ENCODE measurements at regions of chr3 and their contacts with region 1.

Region 1: DNA sequence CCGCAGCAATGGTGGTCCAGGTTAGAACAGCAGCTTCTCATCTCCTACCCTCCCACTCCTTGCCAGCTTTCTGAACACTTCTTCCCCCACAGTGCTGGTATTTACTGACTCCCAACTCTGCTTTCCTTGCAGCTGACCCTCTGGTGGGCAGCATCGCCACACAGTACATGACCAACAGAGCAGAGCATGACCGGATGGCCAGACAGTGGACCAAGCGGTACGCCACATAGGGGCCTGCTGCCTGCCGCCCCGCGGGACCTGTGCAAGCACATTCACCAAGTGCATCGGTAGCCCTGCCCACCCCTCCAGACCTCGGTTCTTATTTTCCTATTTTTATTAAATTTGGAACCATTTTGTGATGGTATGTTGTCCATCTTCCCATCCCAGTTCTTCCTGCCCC is 216.2 kb upstream of the UBE2E1 start:
- DNase-seq: no peak

Region 2: GRCh38 chr3:23442598-23443383 is 146.8 kb before region 1 on chr3:
- intact Hi-C with region 1: no loop called
- DNase-seq: no peak

Region 3: DNA sequence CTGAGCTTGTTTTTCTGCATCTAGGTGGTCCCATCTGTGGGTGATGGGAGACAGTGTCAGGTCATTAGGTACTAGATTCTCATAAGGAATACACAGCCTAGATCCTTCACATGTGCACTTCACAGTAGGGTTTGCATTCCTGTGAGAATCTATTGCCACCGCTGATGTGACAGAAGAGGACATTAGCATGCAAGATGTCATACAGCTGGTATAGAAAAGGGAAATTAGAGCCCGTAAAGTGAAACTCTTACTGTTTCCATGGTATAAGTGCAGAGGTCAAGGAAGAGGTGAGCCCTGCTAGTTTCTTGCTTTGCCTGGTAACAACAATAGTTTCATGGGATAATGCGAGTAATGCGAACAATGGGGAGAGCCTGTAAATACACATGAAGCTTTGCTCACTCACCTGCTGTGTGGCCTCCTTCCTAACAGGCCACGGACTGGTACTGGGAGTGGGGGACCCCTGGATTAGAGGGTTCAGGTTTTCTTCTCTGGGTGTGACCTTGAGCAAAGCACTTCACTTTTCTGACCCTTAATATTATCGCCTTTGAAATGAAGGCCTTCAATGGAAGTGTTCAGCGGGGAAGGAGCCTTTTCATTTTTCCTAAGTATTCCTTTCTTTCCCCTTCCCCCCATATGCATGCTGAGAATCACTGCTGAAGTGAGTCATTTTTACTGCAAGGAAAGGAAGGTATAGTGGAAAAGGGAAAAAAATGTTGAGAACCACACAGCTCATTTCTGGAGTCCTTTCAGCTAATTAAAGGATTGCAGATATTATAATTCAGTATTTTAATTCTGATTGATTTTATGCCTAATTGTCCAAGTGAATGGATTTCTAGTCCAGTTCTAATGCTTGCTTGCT is 100.1 kb before region 1 on chr3:
- intact Hi-C with region 1: loop called in 1 of 2 experiments (anchors 5 kb)
- DNase-seq: no peak